ENCODE measurements at regions of chr7 and their contacts with region 1.

Region 1: GRCh38 chr7:135620980-135621850 is 41.1 kb upstream of the STMP1 start:
- DNase-seq: peak; percentile 78
- H3K4me3 ChIP-seq: no peak overlapping the region
- CTCF ChIP-seq: peak; percentile 48

Region 2: DNA sequence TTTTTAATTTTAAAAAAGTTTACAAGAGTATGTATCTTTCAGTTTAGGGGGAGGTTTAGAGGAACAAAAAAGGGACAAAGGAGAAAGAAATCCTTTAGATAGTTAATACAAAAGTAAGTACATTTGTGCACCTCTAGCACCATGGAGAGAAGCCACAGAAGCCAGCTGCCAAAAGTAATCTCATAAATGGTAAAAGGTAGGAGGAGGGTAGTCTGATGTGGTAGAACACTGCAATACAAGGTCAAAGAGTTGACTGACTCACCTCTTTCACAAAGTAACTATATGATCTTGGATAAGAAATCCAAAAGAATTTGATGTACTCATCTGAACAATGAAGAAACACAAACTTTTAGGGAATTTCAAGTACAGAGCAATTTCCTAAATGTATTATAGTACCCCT is 179.4 kb before region 1 on chr7:
- CTCF ChIA-PET with region 1: no interaction called
- POLR2A ChIA-PET with region 1: no interaction called
- DNase-seq: no peak
- H3K4me3 ChIP-seq: no peak overlapping the region
- CTCF ChIP-seq: no peak

Region 3: GRCh38 chr7:135601182-135601581 is 20.0 kb before region 1 on chr7:
- CTCF ChIA-PET with region 1: interaction called, 28 read pairs
- POLR2A ChIA-PET with region 1: no interaction called
- DNase-seq: no peak
- H3K4me3 ChIP-seq: no peak overlapping the region
- CTCF ChIP-seq: no peak

Region 4: DNA sequence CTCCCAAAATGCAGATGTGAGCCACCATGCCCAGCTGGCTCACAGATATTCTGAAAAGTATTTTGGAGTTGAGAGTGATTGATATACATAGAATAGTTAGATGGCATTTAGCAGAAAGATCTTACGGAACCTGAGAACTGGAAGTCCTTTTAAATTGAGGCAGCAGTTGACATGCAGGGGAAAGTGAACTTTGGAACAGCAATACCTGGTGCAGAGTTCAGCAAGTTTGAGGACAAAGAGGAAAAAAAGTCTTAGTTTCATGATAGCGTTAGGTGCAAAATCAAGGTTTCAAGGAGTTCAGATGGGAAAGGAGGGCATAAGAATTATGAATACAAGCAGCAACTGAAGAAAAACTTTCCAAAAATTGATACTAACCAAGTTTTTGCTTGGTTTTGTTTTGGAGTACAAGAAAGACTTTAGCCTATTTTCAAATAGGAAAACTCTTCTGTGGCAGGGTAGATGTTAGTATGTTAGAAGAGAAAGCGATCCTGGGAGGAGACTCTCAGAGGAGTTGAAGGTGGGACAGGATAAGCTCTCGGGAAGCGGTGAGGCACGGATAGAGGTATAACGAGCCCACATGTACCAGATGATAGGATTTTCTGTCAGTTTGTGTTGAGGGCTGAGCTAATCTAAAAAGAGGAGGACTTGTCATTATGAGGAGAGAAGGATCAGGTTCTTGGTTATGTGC is 13.1 kb after region 1 on chr7:
- CTCF ChIA-PET with region 1: interaction called, 12 read pairs
- POLR2A ChIA-PET with region 1: no interaction called
- DNase-seq: no peak
- H3K4me3 ChIP-seq: no peak overlapping the region
- CTCF ChIP-seq: no peak

Region 5: DNA sequence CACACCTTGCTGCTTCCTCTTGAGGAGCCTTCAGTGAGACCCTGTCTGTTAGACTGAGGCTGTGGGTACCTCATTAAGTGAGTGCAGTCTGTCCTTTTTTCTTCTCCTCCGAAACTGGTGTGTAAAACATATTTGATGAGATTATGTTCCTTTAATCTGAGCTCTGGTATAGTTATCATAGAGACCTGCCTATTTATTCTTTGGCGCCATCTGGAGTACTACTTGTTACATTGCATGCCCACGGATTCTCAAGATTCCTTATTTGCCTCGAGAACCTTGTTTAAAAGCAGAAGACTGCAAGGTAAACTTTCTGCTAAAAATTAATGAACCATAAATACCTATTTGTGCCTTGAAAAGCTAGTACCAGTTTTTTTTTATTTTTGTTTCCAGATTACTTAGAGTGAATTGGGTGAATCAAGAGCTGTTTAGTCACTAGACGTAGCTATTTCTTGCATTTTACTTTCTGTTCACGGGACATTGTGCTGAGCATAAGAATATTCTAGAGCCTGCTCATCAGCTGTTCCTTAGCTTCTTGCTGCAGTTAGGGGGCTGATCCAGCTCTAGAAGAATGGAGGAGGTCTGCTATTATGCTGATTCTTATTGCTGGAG is 24.2 kb after region 1 on chr7:
- CTCF ChIA-PET with region 1: interaction called, 319 read pairs
- POLR2A ChIA-PET with region 1: no interaction called
- DNase-seq: no peak
- H3K4me3 ChIP-seq: no peak overlapping the region
- CTCF ChIP-seq: peak; percentile 52

Region 6: GRCh38 chr7:136312592-136312991 is 691.4 kb after region 1 on chr7:
- CTCF ChIA-PET with region 1: no interaction called
- POLR2A ChIA-PET with region 1: no interaction called
- DNase-seq: no peak
- H3K4me3 ChIP-seq: no peak overlapping the region
- CTCF ChIP-seq: no peak

Measured in AG04449 (cell line).